ENCODE measurements at regions of chr9 and their contacts with region 1.

Region 1: DNA sequence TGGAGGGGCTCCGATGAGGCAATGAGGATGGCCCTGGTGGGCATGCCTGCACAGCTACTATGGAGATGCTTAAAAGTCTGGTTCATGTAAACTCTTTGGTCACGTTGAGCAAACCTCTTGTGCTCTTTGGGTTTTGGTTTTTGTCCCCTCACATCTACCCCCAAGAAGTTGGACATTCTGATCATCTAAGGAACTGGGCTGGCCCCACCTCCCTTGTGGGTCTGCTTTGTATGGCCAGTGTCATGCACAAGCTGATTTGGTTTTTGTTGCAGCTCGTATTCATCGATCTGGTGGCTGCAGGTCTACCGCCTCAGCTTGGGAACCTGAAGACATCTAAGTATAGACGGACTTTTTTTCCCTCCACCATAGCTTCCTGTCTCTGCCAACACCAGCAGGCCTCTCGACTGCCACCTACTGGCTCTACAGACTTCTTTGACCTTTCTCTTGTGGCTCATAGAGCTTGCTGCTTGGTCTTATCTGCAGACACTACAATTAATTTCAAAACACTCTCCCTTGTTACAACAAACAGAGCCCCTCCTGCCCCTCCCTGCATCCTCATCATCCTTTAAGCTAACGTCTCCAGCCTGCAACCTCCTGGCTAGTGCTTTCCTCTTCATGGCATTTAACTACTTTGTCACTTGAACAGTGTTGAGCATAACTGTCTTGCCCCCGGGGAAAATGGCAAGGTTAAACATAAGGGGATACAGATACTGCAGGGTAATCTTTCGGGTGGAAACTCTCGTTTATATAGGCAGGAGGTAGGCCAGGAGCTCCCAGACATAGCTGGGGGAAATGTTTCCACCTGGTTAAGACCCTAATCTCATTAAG is 34.5 kb downstream of the TSTD2 start:
- DNase-seq: peak; percentile 69
- ATAC-seq: peak; percentile 90
- H3K4me3 Mint-ChIP-seq: no peak overlapping the region
- H3K27ac Mint-ChIP-seq: peak overlapping the region; percentile 75; the same call in 1 of the 2 replicates
- H3K4me1 Mint-ChIP-seq: peaks cover 4% of the 10 kb centered on the region
- H3K27me3 Mint-ChIP-seq: no peaks in the 10 kb centered on the region
- CTCF ChIP-seq: peak; percentile 81

Region 2: DNA sequence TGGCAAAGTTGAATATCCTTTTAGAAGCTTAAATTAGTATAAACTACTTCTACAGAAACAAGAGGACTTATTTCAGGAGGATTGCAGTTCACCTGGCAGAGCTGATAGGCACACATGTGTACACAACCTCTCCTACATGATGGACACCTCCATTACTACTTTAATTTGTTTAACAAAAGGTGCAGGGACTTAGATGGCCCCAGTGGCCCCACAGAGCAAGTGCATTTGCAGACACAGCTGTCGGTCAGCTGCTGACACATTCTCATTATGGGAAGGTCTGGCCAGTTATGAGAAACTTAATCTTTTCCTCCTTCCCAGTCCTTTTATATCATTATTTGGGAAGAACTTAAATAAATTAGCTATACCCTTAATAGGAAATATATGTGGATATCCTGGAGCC is 158.5 kb before region 1 on chr9:
- CTCF ChIA-PET with region 1: interaction called, 11 read pairs
- POLR2A ChIA-PET with region 1: no interaction called
- DNase-seq: no peak
- ATAC-seq: peak; percentile 57
- H3K4me3 Mint-ChIP-seq: no peak overlapping the region
- H3K27ac Mint-ChIP-seq: no peak overlapping the region
- H3K4me1 Mint-ChIP-seq: peaks cover 9% of the 10 kb centered on the region
- H3K27me3 Mint-ChIP-seq: no peaks in the 10 kb centered on the region
- CTCF ChIP-seq: no peak

Region 3: DNA sequence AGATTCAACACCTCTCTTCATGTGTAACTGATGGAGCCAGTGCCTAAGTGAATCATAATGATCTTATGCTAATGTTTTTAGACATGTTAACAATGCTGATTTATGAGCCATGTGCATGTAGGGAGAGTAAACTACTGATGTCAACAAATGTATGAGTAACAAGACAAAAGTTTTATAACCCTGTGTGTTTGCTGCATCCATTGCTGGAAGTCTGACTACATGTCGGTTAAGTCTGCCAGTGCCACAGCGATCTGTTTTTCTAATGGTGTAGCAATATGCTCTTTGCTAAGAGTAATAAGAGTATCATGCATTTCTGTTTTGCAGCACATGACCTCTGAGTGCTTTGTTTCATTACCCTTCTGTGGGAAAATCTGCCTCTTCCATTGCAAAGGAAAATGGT is 123.6 kb before region 1 on chr9:
- CTCF ChIA-PET with region 1: interaction called, 112 read pairs
- POLR2A ChIA-PET with region 1: no interaction called
- DNase-seq: no peak
- ATAC-seq: no peak
- H3K4me3 Mint-ChIP-seq: no peak overlapping the region
- H3K27ac Mint-ChIP-seq: no peak overlapping the region
- H3K4me1 Mint-ChIP-seq: peaks cover 4% of the 10 kb centered on the region; the same call in 1 of the 2 replicates
- H3K27me3 Mint-ChIP-seq: no peaks in the 10 kb centered on the region
- CTCF ChIP-seq: no peak

Region 4: DNA sequence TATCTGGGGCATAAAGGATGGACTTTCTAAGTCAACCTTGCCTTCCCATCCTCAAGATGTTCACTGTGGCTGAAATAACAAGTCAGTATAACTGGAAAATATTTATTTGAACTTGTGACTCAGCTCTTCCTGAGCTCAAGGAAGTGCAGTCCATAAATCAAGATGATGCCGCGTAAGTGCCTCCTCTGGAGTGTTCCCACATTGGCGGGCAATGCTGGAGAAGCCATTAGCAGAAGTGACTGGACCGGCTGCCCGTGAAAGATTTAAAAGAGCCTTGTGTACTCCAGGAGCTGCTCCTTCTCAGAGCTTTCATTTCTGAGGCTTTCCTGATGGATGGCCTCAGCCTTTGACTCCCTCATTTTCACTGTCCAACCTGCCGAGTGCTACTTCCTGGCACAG is 79.8 kb before region 1 on chr9:
- CTCF ChIA-PET with region 1: interaction called, 30 read pairs
- POLR2A ChIA-PET with region 1: no interaction called
- DNase-seq: no peak
- ATAC-seq: no peak
- H3K4me3 Mint-ChIP-seq: no peak overlapping the region
- H3K27ac Mint-ChIP-seq: no peak overlapping the region
- H3K4me1 Mint-ChIP-seq: peaks cover 8% of the 10 kb centered on the region
- H3K27me3 Mint-ChIP-seq: no peaks in the 10 kb centered on the region
- CTCF ChIP-seq: no peak

Region 5: GRCh38 chr9:97567182-97567893 is 31.3 kb before region 1 on chr9:
- CTCF ChIA-PET with region 1: interaction called, 12 read pairs
- POLR2A ChIA-PET with region 1: no interaction called
- DNase-seq: no peak
- ATAC-seq: no peak
- H3K4me3 Mint-ChIP-seq: no peak overlapping the region
- H3K27ac Mint-ChIP-seq: no peak overlapping the region
- H3K4me1 Mint-ChIP-seq: peaks cover 15% of the 10 kb centered on the region
- H3K27me3 Mint-ChIP-seq: no peaks in the 10 kb centered on the region; the same call in 1 of the 2 replicates
- CTCF ChIP-seq: no peak

Region 6: GRCh38 chr9:97632985-97633858 is 34.5 kb after region 1 on chr9 and contains the starts of genes NCBP1 and TSTD2:
- CTCF ChIA-PET with region 1: interaction called, 20 read pairs
- POLR2A ChIA-PET with region 1: no interaction called
- DNase-seq: peak; percentile 94
- ATAC-seq: peak; percentile 92
- H3K4me3 Mint-ChIP-seq: peak within 1 kb of the TSS; percentile 98
- H3K27ac Mint-ChIP-seq: peak within 1 kb of the TSS; percentile 100
- H3K4me1 Mint-ChIP-seq: peaks cover 48% of the 10 kb centered on the region
- H3K27me3 Mint-ChIP-seq: no peaks in the 10 kb centered on the region
- CTCF ChIP-seq: no peak
- total RNA-seq, gene NCBP1: 47.8 to 61.1 TPM (median 51.3 TPM) in 3 replicates
- total RNA-seq, gene TSTD2: 16.8 to 19.6 TPM (median 18.3 TPM) in 3 replicates